Activated CD4-positive, alpha-beta memory T cell treated with anti-CD3 and anti-CD28 coated beads for 36 hours (primary cell): ENCODE measurements at regions of chr19 and their contacts with region 1.

Region 1: GRCh38 chr19:36528194-36528920 is at the start of gene ZNF260:
- DNase-seq: peak; percentile 96
- H3K4me3 Mint-ChIP-seq: peak within 1 kb of the TSS; percentile 99
- H3K27ac Mint-ChIP-seq: peak within 1 kb of the TSS; percentile 95
- H3K4me1 Mint-ChIP-seq: peaks cover 21% of the 10 kb centered on the region
- H3K27me3 Mint-ChIP-seq: no peaks in the 10 kb centered on the region
- total RNA-seq, gene ZNF260: 3.7 TPM

Region 2: DNA sequence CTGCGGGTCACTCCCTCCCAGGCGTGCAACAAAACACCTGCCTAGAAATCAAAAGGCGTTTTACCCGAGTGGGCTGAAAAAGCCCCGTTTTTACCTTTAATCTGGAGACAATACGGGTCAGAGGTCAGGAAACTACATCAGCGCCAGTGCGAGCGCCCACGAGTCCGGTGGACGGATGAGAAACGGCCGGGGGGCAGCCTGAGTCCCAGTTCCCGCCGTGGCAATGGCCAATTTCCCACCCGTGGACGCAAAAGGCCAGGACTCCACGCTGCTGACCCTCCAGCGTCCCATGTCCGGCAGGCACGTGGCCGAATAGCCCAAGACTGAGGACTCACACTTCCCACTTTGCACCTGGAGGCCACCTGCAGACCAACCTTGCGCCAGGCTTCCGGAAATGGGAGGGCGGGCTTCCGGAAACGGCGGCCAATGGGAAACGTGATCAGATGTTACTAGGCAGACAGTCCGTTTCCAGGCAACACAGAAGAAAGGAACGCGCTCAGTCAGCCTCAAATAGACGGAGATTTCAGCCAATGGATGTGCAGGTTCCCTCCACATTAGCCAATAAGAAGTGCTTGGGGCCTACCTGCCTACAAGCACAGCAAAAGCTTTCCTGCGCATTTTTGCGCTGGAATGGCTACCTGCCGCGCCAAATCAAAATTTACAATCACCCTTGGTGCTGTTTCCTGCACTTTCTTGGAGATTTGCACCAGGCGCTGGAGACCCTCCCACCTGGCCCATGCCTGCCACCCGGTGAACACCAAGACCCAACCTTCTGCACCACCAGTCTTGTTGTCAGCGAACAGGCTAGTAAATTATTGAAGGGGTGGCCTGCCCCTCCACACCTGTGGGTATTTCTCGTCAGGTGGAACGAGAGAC is 196.8 kb before region 1 on chr19:
- CTCF ChIA-PET with region 1: no interaction called
- POLR2A ChIA-PET with region 1: no interaction called
- intact Hi-C with region 1: no loop called
- DNase-seq: peak; percentile 70
- H3K4me3 Mint-ChIP-seq: peak overlapping the region; percentile 46
- H3K27ac Mint-ChIP-seq: no peak overlapping the region
- H3K4me1 Mint-ChIP-seq: peaks cover 3% of the 10 kb centered on the region
- H3K27me3 Mint-ChIP-seq: no peaks in the 10 kb centered on the region

Region 3: DNA sequence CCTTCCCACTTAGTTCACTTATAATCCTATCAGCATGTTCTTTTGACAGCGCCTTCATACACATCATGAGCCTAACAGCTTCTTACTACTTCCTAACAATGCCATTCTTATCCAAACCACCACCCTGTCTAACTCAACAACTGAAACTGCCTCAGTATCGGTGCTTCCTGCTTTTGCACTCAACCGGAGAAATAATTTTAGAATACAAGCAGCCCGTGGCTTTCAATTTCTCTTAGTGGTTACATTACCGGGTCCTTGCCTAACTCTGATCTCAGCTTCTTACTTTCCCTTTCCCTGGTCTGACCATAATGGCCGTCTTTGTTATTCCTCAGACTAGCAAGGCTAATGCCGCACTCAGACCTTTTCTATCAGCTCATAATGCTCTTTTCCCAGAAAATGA is 126.9 kb before region 1 on chr19:
- CTCF ChIA-PET with region 1: no interaction called
- POLR2A ChIA-PET with region 1: no interaction called
- intact Hi-C with region 1: no loop called
- DNase-seq: no peak
- H3K4me3 Mint-ChIP-seq: no peak overlapping the region
- H3K27ac Mint-ChIP-seq: no peak overlapping the region
- H3K4me1 Mint-ChIP-seq: no peaks in the 10 kb centered on the region
- H3K27me3 Mint-ChIP-seq: no peaks in the 10 kb centered on the region

Region 4: GRCh38 chr19:36418287-36419001 is 109.9 kb before region 1 on chr19 and contains the start of gene ZFP82:
- CTCF ChIA-PET with region 1: no interaction called
- POLR2A ChIA-PET with region 1: no interaction called
- intact Hi-C with region 1: loop called (anchors 2 kb)
- DNase-seq: peak; percentile 83
- H3K4me3 Mint-ChIP-seq: peak within 1 kb of the TSS; percentile 91
- H3K27ac Mint-ChIP-seq: peak within 1 kb of the TSS; percentile 89
- H3K4me1 Mint-ChIP-seq: peaks cover 26% of the 10 kb centered on the region
- H3K27me3 Mint-ChIP-seq: peaks cover 15% of the 10 kb centered on the region
- total RNA-seq, gene ZFP82: 3.7 to 3.9 TPM

Region 5: GRCh38 chr19:36508325-36508724 is 20.0 kb before region 1 on chr19:
- CTCF ChIA-PET with region 1: no interaction called
- POLR2A ChIA-PET with region 1: no interaction called
- intact Hi-C with region 1: no loop called
- DNase-seq: no peak
- H3K4me3 Mint-ChIP-seq: no peak overlapping the region
- H3K27ac Mint-ChIP-seq: no peak overlapping the region
- H3K4me1 Mint-ChIP-seq: no peaks in the 10 kb centered on the region
- H3K27me3 Mint-ChIP-seq: no peaks in the 10 kb centered on the region

Region 6: GRCh38 chr19:36573020-36573885 is 44.9 kb after region 1 on chr19 and contains the start of gene ZNF529:
- CTCF ChIA-PET with region 1: interaction called, 4 read pairs
- POLR2A ChIA-PET with region 1: no interaction called
- intact Hi-C with region 1: loop called (anchors 1 kb)
- DNase-seq: peak; percentile 92
- H3K4me3 Mint-ChIP-seq: peak within 1 kb of the TSS; percentile 87
- H3K27ac Mint-ChIP-seq: peak within 1 kb of the TSS; percentile 92
- H3K4me1 Mint-ChIP-seq: peaks cover 32% of the 10 kb centered on the region
- H3K27me3 Mint-ChIP-seq: no peaks in the 10 kb centered on the region
- total RNA-seq, gene ZNF529: 14.3 to 15.4 TPM

Region 7: GRCh38 chr19:36665832-36666231 is 137.5 kb after region 1 on chr19:
- CTCF ChIA-PET with region 1: no interaction called
- POLR2A ChIA-PET with region 1: no interaction called
- intact Hi-C with region 1: loop called (anchors 2 kb)
- DNase-seq: no peak
- H3K4me3 Mint-ChIP-seq: peak overlapping the region; percentile 94
- H3K27ac Mint-ChIP-seq: peak overlapping the region; percentile 61
- H3K4me1 Mint-ChIP-seq: peaks cover 28% of the 10 kb centered on the region
- H3K27me3 Mint-ChIP-seq: no peaks in the 10 kb centered on the region

Region 8: GRCh38 chr19:36772311-36773222 is 244.2 kb after region 1 on chr19 and contains the start of gene ZNF850:
- CTCF ChIA-PET with region 1: no interaction called
- POLR2A ChIA-PET with region 1: no interaction called
- intact Hi-C with region 1: loop called (anchors 1 kb)
- DNase-seq: peak; percentile 95
- H3K4me3 Mint-ChIP-seq: peak within 1 kb of the TSS; percentile 91
- H3K27ac Mint-ChIP-seq: peak within 1 kb of the TSS; percentile 83
- H3K4me1 Mint-ChIP-seq: peaks cover 21% of the 10 kb centered on the region
- H3K27me3 Mint-ChIP-seq: no peaks in the 10 kb centered on the region
- total RNA-seq, gene ZNF850: 6.7 TPM

Region 9: GRCh38 chr19:37098548-37098947 is 570.2 kb after region 1 on chr19:
- CTCF ChIA-PET with region 1: no interaction called
- POLR2A ChIA-PET with region 1: no interaction called
- intact Hi-C with region 1: no loop called
- DNase-seq: no peak
- H3K4me3 Mint-ChIP-seq: no peak overlapping the region
- H3K27ac Mint-ChIP-seq: no peak overlapping the region
- H3K4me1 Mint-ChIP-seq: no peaks in the 10 kb centered on the region
- H3K27me3 Mint-ChIP-seq: no peaks in the 10 kb centered on the region

Region 10: GRCh38 chr19:37217855-37218591 is 689.7 kb after region 1 on chr19 and contains the start of gene ZNF383:
- CTCF ChIA-PET with region 1: no interaction called
- POLR2A ChIA-PET with region 1: no interaction called
- intact Hi-C with region 1: loop called (anchors 2 kb)
- DNase-seq: peak; percentile 90
- H3K4me3 Mint-ChIP-seq: peak within 1 kb of the TSS; percentile 99
- H3K27ac Mint-ChIP-seq: peak within 1 kb of the TSS; percentile 99
- H3K4me1 Mint-ChIP-seq: peaks cover 19% of the 10 kb centered on the region
- H3K27me3 Mint-ChIP-seq: no peaks in the 10 kb centered on the region
- total RNA-seq, gene ZNF383: 7.7 TPM